Activated T-helper 1 cell treated with anti-CD3 and anti-CD28 coated beads, Interleukin-12 subunit alpha, Interleukin-12 subunit beta, Interleukin-2, Interleukin-4 antibody, amounts not matched to agents 30 ng/mL and 10 ng/mL and 1 ng/mL, durations not matched to agents 14 hours and 24 hours and 36 hours (primary cell): ENCODE measurements at regions of chr14 and their contacts with region 1.

Region 1: DNA sequence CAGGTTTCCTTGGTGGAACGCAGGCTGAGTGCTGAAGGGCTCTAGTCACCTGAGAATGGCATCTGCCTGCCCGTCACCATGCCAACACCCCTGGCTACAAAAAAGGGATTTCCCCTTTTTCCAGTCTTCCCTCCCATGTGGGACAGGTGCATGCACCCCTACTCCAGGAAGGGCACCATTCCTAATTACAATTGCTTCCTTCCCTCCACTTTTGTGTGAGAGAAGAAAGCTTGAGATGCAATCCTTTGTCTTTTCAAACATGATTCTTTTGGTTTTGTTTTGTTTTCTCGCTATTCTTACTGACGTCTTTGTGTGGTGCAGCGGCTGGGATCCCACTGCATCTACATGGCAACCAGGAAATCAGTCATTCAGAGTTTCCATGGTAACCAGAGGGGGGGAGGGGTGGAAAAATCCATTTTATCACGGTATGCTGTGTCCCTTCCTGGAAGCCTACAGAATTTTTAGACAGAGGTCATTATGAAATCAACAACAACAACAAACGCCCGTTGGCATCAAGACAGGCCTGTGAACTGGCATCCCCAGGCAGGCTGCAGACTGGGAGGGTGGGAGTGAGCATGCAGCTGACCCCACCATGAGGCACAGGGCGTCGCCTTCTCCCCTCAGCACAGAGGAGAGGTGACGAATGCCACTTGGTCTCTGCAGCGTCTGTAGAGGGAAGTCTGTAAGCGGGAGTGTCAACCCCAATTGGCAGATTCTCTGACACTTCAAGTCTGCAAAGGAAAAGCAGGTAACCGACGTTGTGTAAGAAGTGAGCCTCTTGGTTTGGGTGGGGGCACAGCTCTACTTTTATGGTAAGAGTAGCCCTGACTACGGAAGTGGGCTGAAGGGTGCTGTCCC is 13.6 kb upstream of the GNG2 start:
- DNase-seq: peak; percentile 86
- H3K4me3 Mint-ChIP-seq: peak overlapping the region; percentile 85
- H3K27ac Mint-ChIP-seq: peak overlapping the region; percentile 98
- H3K4me1 Mint-ChIP-seq: peaks cover 60% of the 10 kb centered on the region
- H3K27me3 Mint-ChIP-seq: no peaks in the 10 kb centered on the region

Region 2: GRCh38 chr14:51744372-51745130 is 102.3 kb before region 1 on chr14:
- intact Hi-C with region 1: loop called (anchors 2 kb)
- DNase-seq: peak; percentile 21
- H3K4me3 Mint-ChIP-seq: no peak overlapping the region
- H3K27ac Mint-ChIP-seq: no peak overlapping the region
- H3K4me1 Mint-ChIP-seq: no peaks in the 10 kb centered on the region
- H3K27me3 Mint-ChIP-seq: no peaks in the 10 kb centered on the region

Region 3: GRCh38 chr14:51860164-51860824 is 13.4 kb after region 1 on chr14 and contains the start of gene GNG2:
- intact Hi-C with region 1: loop called (anchors 1 kb)
- DNase-seq: peak; percentile 77
- H3K4me3 Mint-ChIP-seq: peak within 1 kb of the TSS; percentile 95
- H3K27ac Mint-ChIP-seq: peak within 1 kb of the TSS; percentile 88
- H3K4me1 Mint-ChIP-seq: peaks cover 63% of the 10 kb centered on the region
- H3K27me3 Mint-ChIP-seq: peaks cover 2% of the 10 kb centered on the region
- total RNA-seq, gene GNG2: 126 and 128 TPM in 2 replicates

Region 4: GRCh38 chr14:51908086-51908485 is 61.2 kb after region 1 on chr14:
- intact Hi-C with region 1: loop called (anchors 1 kb)
- DNase-seq: no peak
- H3K4me3 Mint-ChIP-seq: no peak overlapping the region
- H3K27ac Mint-ChIP-seq: peak overlapping the region; percentile 36
- H3K4me1 Mint-ChIP-seq: peaks cover 47% of the 10 kb centered on the region
- H3K27me3 Mint-ChIP-seq: no peaks in the 10 kb centered on the region

Region 5: GRCh38 chr14:51989293-51990234 is 142.7 kb after region 1 on chr14 and contains the start of gene RTRAF:
- intact Hi-C with region 1: loop called (anchors 1 kb)
- DNase-seq: peak; percentile 89
- H3K4me3 Mint-ChIP-seq: peak within 1 kb of the TSS; percentile 94
- H3K27ac Mint-ChIP-seq: peak within 1 kb of the TSS; percentile 91
- H3K4me1 Mint-ChIP-seq: peaks cover 31% of the 10 kb centered on the region
- H3K27me3 Mint-ChIP-seq: no peaks in the 10 kb centered on the region
- total RNA-seq, gene RTRAF: 215 and 230 TPM in 2 replicates

Region 6: DNA sequence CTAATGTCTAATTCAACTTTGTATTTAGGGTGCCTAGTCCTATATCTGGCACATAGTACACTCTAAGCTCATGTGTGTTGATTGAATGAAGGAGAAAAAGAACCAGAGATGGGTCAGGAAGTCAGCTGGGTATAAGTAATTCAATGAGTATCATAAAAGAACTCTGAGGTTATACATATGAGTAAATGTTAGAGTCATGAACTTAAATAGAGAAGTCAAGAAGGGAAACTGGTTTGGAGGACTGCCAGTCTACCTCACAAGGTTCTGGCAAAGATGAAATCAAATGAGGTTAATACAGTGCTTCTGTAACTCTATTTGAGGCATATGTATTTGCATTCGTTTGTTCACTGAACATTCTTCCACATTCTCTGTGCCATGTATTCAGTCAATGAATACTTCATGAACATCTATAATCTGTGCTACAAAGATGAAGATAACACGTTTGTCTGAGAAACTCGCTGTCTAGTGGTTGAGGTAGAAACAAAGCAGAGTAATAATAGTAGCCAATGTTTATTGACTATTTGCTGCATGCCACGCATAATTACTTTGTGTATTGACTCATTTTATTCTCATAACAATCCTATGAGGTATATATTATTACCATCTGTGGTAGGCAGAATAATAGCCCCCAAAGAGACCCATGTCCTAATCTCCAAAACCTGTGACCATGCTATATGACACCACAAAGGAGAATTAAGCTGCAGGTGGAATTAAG is 556.1 kb after region 1 on chr14:
- intact Hi-C with region 1: loop called (anchors 10 kb)
- DNase-seq: no peak
- H3K4me3 Mint-ChIP-seq: no peak overlapping the region
- H3K27ac Mint-ChIP-seq: peak overlapping the region; percentile 54
- H3K4me1 Mint-ChIP-seq: peaks cover 73% of the 10 kb centered on the region
- H3K27me3 Mint-ChIP-seq: no peaks in the 10 kb centered on the region